ENCODE measurements at regions of chr15 and their contacts with region 1.

Region 1: DNA sequence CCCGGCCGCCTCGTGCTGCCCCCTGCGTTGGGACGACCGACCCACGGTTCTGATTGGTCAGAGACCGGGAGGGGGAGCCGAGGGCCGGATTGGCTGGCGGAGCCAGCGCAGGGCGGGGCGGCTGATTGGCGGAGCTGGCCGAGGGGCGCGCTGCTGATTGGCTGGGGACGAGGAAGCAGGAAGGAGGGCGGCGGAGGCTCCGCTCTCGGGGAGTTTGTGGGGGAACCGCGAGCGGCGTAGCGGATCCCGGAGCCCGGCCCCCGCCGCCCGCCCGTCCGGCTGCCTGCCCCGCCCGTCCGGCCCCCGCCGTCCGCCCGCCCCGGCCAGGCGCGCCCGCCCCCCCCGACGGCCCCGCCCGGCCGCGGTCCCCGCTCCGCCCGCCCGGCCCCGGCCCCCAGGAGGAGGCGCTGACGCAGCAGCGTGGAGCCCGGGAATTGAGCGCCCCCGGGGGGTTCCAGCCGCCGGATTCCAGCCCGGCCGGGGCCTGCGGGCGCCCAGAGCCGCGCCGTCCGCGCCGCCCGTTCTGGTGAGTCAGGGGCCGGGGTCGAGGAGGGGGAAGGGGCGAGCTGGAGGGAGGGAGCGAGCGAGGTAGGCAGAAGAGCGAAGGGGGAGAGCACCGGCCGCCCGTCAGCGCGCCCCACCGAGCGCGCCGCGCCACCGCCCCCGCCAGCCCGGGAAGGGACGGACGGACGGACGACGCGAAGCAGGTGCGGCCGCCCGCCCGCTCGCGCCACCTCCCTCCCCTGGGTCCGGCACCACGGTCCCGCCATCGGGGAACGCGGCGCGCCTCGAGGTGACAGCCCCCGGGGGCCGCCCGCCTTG is at the start of gene BAHD1:
- DNase-seq: peak; percentile 95 to 96
- ATAC-seq: peak; percentile 83 to 86
- H3K4me3 ChIP-seq: peak within 1 kb of the TSS; percentile 74 to 98 (median 81)
- H3K27ac ChIP-seq: peak within 1 kb of the TSS; percentile 76 to 86 (median 82)
- H3K4me1 ChIP-seq: peaks cover 14 to 20% of the 10 kb centered on the region in 2 donors
- H3K27me3 ChIP-seq: peaks cover 14 to 23% (median 18%) of the 10 kb centered on the region in 3 donors
- CTCF ChIP-seq: peak in 1 of 5 experiments; percentile 13
- POLR2A ChIP-seq: peak; percentile 46 to 47
- total RNA-seq, gene BAHD1: 8.8 to 27.4 (median 13.5) TPM

Region 2: DNA sequence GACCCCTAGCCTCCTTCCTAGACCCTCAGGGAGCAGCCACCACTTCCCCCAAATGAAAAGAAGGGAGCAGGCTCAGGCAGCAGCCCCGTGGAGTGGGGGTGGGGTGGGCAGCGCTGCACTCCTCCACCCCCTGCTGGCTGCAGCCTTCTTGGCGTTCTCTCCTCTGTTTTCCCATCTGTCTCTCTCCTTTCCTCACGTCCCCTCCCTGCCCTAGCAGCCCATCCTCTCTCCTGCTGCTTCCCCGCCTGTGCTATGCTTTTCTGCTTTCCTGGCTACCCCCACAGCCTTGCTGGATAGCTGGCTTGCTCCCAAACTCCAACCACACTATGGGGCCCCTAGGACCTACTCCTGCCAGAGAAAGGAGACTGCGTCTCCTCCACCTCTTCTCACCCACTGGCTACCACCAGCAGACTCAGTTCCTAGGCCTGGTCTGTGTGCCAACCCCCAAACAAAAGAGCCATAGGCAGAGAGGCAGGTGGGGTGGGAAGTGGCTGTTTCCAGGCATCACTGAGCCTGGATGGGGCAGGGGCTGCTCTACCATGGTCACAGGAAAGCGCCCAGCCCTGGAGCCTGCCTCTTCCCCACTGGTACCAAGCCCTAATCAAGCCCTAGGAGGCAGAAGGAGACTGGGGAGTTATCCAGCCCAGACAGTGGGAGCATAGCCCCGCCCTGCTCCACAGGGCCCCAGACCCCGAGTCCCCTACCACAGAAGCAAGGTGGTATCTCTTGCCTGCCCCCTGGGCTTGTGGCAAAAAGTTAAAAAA is 86.4 kb before region 1 on chr15:
- in situ Hi-C with region 1: no loop called
- intact Hi-C with region 1: no loop called
- DNase-seq: no peak
- ATAC-seq: no peak
- H3K4me3 ChIP-seq: no peak overlapping the region
- H3K27ac ChIP-seq: peak overlapping the region in 2 of 4 donors; percentile 55 to 59
- H3K4me1 ChIP-seq: peaks cover 16 to 28% of the 10 kb centered on the region in 2 donors
- H3K27me3 ChIP-seq: no peaks in the 10 kb centered on the region
- CTCF ChIP-seq: peak in 4 of 5 experiments; percentile 8 to 38 (median 23)
- POLR2A ChIP-seq: no peak

Region 3: DNA sequence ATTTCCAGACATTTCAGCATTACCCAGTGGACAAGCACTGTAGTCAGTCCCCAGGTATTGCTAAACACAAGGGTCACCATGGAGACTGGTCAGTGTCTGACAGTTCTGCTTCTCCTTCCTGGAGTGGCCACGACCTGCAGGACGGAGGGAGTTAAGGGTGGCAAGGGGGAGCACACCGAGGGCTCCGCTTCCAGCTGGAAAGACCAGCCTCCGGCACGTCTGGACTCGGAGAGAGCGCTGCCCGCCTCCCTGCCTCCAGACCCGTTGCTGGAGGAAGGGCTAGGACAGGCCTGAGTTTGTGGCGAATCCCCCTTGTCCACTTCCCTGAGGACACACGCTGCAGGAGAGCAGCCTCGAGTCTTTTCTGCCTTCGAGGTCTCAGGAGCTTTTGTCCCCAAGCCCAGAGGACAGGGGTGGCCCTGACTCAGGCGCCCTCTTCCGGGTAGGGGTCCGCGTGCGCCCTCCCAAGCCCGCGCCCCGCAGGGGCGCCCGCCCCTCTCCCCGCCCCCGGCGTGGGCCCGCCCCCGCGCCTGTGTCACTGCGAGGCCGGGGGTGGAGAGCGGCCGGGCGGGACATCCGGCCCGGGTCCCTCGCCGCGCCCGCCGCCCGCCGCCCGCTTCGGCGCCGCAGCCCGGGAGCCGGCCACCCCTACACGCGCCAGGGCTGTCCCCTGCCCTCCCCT is 29.6 kb after region 1 on chr15 and contains the start of gene CHST14:
- in situ Hi-C with region 1: no loop called
- intact Hi-C with region 1: loop called (anchors 2 kb)
- DNase-seq: peak in 1 of 2 donors; percentile 27
- ATAC-seq: peak; percentile 62 to 75
- H3K4me3 ChIP-seq: peak within 1 kb of the TSS; percentile 73 to 87 (median 80)
- H3K27ac ChIP-seq: peak within 1 kb of the TSS; percentile 73 to 79 (median 78)
- H3K4me1 ChIP-seq: peaks cover 4 to 11% of the 10 kb centered on the region in 2 donors
- H3K27me3 ChIP-seq: no peaks in the 10 kb centered on the region
- CTCF ChIP-seq: no peak
- POLR2A ChIP-seq: peak in 1 of 2 donors; percentile 7
- total RNA-seq, gene CHST14: 3.0 to 5.2 (median 3.9) TPM